ENCODE measurements at regions of chr5 and their contacts with region 1.

Region 1: DNA sequence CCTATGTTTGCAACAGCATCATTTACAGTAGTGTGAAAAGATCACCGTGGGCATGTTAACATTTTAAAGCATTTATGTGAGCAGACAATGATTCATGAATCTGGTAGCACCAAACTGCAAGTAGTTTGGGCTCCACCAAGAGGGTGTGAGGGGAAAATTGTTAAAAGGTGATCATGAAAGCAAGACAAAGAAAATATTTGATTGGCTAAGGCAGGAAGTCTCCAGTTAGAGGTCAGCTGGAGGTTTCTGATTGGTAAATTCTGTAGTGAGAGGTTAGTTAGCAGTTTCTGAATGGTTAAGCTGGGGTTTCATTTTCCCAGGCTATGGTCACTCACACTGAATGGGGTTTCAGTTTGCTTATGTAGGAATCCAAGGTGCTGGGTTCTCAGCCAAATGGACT is 13.5 kb upstream of the DRD1 start:
- H3K4me3 ChIP-seq: no peak overlapping the region
- H3K27ac ChIP-seq: no peak overlapping the region
- H3K4me1 ChIP-seq: no peaks in the 10 kb centered on the region
- CTCF ChIP-seq: peak; percentile 53; the same call in 1 of the 2 replicates

Region 2: DNA sequence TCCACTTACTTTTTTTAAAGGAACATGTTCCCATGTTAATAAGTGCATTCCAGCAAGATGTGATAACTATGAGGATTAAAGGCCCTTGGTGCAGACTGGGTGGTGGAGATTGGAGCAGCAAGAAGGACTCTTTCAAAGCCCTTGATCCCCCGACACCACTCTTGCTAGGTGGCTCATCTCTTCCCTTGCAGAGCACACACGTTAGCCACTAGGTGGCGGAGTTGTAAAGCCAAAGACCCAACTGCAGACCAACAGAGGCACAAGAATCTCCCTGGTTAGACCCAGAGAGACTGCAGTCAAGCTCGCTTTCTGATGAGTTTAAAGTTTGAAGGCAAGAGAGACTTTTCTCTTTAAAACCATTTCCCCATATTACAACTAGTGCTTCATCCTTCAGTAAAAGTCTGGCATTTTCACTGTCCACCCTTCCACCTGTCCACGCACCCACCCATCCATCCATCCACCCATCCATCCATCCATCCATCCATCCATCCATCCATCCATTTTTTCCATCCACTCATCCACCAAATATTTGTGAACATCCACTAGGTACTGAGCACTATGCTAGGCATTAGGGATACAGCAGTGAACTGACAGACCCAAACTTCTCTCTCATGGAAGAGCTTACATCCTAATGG is 506.2 kb before region 1 on chr5:
- CTCF ChIA-PET with region 1: interaction called, 20 read pairs
- POLR2A ChIA-PET with region 1: no interaction called
- H3K4me3 ChIP-seq: no peak overlapping the region
- H3K27ac ChIP-seq: no peak overlapping the region
- H3K4me1 ChIP-seq: no peaks in the 10 kb centered on the region
- CTCF ChIP-seq: peak; percentile 80

Region 3: GRCh38 chr5:175444060-175444904 is 13.2 kb before region 1 on chr5 and contains the start of gene DRD1:
- CTCF ChIA-PET with region 1: interaction called, 18 read pairs
- POLR2A ChIA-PET with region 1: no interaction called
- H3K4me3 ChIP-seq: peak within 1 kb of the TSS; percentile 30
- H3K27ac ChIP-seq: peak within 1 kb of the TSS; percentile 56; the same call in 1 of the 2 replicates
- H3K4me1 ChIP-seq: no peaks in the 10 kb centered on the region
- CTCF ChIP-seq: peak; percentile 50; the same call in 1 of the 2 replicates

Region 4: DNA sequence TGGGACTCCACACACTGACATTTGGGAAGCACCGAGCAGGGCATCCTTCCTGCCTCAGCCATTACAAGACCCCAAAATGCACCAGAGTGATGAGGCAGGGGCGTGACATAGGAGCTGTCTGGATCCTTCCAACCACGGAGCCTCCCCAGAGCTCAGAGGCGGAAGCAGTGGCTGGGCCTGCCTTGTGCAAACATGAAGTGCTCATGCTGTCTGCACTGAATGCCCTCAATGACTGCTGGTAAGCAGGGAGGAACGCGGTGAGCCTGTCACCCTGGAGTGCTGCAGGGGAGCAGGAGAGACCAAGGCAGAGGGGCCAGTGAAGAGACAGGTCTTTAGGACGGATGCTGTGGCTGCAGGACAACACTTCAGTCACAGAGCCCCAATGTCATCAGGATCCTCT is 140.3 kb after region 1 on chr5:
- CTCF ChIA-PET with region 1: no interaction called
- POLR2A ChIA-PET with region 1: no interaction called
- H3K4me3 ChIP-seq: no peak overlapping the region
- H3K27ac ChIP-seq: no peak overlapping the region
- H3K4me1 ChIP-seq: no peaks in the 10 kb centered on the region
- CTCF ChIP-seq: no peak

Region 5: GRCh38 chr5:175623088-175623487 is 165.6 kb after region 1 on chr5:
- CTCF ChIA-PET with region 1: no interaction called
- POLR2A ChIA-PET with region 1: no interaction called
- H3K4me3 ChIP-seq: no peak overlapping the region
- H3K27ac ChIP-seq: no peak overlapping the region
- H3K4me1 ChIP-seq: no peaks in the 10 kb centered on the region
- CTCF ChIP-seq: no peak

Region 6: GRCh38 chr5:176899296-176899891 is 1441.9 kb after region 1 on chr5 and contains the start of gene HK3:
- CTCF ChIA-PET with region 1: no interaction called
- POLR2A ChIA-PET with region 1: no interaction called
- H3K4me3 ChIP-seq: no peak within 1 kb of the TSS
- H3K27ac ChIP-seq: no peak within 1 kb of the TSS
- H3K4me1 ChIP-seq: no peaks in the 10 kb centered on the region
- CTCF ChIP-seq: no peak